ENCODE measurements at regions of chr9 and their contacts with region 1.

Region 1: DNA sequence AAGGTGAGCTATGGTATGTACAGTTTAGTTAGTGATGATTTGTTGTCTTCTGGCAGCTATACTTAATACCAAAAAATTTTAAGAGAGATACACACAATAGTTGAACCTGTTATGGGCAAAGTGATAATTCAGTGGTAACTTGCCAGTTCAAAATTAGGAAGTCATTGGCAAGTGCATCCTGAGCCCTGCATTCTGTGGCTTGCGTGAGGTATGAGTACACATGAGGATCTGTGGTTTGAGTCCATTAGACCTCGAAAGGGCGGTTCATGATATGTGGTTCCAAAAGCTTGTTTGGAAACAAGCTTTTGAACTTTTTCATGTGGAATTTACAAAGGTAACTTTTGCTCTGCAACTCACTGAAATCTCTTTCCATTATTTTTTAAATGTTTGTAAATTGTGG is 47.0 kb downstream of the GPR21 start:
- DNase-seq: no peak
- ATAC-seq: no peak

Region 2: GRCh38 chr9:122875523-122875922 is 204.9 kb before region 1 on chr9:
- intact Hi-C with region 1: no loop called
- DNase-seq: no peak
- ATAC-seq: no peak

Region 3: GRCh38 chr9:122897969-122898368 is 182.5 kb before region 1 on chr9:
- intact Hi-C with region 1: no loop called
- DNase-seq: no peak
- ATAC-seq: no peak

Region 4: DNA sequence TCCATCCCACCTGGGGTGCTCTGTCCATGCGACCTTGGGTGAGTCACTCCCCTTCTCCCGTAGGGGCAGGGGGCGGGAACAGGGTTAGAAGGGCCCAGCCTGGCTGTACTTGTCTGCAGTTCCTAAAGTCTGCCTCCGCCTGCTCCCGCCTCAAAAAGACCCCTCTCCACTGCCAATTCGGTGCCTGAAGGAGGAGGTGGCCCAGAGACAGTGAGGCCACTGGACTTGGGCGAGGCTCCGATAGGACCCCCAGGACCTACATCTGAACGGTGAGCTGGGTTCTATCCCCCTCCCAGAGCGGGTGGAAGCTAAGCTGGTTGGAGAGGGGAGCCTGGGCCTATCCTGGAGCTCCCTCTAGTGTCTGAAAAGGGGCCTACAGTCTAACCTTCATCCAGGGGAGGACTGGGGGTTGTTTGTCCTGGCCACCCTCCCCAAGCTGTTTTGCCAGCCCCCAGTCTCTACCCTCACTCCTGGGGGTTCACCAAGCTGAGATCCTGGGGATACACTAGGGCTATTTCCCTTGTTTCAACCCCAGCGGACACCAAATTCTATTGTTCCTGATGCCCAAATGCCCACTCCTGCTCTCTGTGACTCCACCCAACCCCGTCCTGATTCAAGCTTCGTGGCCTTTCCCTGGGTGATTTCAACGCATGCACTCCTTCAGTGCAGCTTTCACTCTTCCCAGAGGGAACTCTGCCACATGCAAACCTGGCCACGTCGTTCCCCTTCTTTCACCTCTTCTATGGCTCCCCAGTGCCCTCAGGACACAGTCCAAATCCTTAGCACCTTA is 269.4 kb after region 1 on chr9:
- intact Hi-C with region 1: loop called (anchors 1 kb)
- DNase-seq: no peak
- ATAC-seq: peak; percentile 78

Measured in sciatic nerve (tissue), 2 donors.